Activated CD4-positive, alpha-beta T cell treated with anti-CD3 and anti-CD28 coated beads, Interleukin-2, amount 10 ng/mL, durations not matched to agents 24 days and 14 days (primary cell): ENCODE measurements at regions of chr12 and their contacts with region 1.

Region 1: DNA sequence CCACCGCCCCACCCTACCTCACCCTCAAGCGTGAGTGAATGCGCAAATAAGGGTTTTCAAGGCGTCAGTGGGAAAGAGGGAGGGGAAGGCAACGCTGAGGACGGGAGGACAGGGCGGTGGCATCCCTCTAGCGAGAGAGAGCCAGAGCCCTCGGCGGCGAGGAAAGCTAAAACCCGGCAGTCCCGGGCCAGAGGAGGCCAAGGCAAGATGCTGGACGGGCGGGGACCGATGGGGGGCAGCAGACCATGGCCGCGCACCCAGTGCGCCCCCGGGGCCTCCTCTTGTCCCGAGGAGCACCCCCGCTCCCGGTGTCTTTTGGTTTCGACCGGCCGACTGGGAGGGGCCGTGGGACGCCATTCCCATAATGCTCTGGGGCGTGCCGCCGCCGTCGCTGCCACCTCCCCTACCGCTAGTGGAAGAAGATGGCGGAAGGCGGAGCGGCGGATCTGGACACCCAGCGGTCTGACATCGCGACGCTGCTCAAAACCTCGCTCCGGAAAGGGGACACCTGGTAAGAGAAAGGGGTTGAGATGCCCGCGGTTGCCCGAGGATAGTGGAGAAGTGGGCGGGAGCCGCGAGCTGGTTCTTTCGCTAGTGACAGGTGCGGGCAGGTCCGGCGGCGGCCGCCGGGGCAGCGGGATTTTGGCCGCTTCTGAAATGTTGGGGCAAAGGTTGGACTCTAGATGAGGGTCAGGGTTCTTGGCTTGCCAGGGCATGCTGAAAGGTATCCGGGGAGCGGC is at the start of gene USP15:
- DNase-seq: peak; percentile 99
- H3K4me3 Mint-ChIP-seq: peak within 1 kb of the TSS; percentile 94
- H3K27ac Mint-ChIP-seq: peak within 1 kb of the TSS; percentile 99
- H3K4me1 Mint-ChIP-seq: peaks cover 48% of the 10 kb centered on the region
- H3K27me3 Mint-ChIP-seq: no peaks in the 10 kb centered on the region
- total RNA-seq, gene USP15: 102 and 112 TPM in 2 replicates

Region 2: DNA sequence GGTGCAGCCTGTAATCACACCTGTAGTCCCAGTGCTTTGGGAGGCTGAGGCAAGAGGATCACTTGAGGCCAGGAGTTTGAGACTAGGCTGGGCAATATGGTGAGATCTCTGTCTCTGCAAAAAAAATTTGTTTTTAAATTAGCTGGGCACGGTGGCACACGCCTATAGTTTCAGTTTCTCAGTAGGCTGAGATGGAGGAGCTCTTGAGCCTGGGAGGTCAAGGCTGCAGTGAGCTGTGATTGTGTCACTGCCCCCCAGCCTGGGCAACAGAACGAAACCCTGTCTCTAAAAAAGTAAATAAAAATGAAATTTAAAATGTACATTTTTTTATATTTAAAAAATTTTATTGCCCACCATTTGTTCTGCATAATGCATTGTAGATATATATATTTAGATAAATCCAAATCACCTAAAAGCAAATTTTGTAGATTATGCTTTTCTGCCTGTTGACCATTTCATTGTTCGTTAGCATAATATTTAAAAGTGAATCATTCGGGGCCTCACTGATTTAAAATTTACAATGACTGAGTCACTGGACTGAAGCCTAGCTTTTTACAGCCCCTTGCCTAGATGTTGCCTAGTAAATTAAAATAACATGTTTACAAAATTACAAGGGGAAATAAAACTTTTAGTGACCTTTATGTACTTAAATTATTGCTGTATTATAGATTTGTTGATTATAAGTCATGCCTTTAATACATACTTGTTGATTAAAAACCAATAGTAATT is 87.9 kb after region 1 on chr12:
- intact Hi-C with region 1: loop called (anchors 5 kb)
- DNase-seq: peak; percentile 51
- H3K4me3 Mint-ChIP-seq: no peak overlapping the region
- H3K27ac Mint-ChIP-seq: no peak overlapping the region
- H3K4me1 Mint-ChIP-seq: peaks cover 15% of the 10 kb centered on the region
- H3K27me3 Mint-ChIP-seq: no peaks in the 10 kb centered on the region

Region 3: DNA sequence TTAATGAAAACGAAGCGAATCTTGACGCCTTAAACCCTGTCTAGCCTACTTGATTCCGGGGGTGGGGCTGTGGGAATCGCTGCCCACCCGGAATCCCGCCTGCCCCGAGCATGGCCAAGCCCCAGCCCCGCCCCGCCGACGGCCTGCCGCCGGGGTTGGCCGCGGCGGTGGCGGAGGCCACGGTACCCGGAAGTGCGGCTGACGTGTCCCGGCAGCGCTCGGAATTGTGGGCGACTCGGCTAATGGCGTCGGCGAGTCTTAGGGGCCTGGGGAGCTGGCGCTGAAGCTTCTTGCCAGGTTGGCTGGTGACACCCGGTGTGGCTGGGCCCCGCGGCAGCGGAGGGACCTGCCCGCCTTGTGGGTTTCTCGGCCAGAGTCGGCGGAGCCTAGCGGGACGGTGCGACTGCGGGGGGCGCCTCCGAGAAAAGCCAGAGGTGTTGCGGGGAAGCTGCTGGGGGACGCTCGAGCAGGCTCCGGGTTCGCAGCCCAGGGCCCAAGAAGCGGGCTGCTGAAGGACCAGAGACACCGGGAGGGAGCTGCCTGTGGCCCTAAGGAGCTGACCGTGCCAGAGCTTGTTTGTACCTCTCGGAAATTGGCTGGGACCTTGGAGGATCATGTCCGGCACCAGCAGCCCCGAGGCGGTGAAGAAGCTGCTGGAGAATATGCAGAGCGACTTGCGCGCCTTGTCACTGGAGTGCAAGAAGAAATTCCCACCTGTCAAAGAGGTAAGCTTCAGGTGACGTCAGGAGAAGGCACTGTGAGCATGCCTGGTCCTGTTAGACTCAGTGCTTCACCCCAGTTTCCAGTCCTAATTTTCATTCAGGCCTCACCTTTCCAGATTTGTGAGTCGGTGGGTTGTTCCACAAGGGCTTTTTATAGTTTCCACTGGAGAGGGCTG is 206.7 kb after region 1 on chr12 and contains the start of gene MON2:
- intact Hi-C with region 1: loop called (anchors 1 kb)
- DNase-seq: peak; percentile 97
- H3K4me3 Mint-ChIP-seq: peak within 1 kb of the TSS; percentile 86
- H3K27ac Mint-ChIP-seq: peak within 1 kb of the TSS; percentile 93
- H3K4me1 Mint-ChIP-seq: peaks cover 19% of the 10 kb centered on the region
- H3K27me3 Mint-ChIP-seq: peaks cover 8% of the 10 kb centered on the region
- total RNA-seq, gene MON2: 32.8 and 36.4 TPM in 2 replicates

Region 4: GRCh38 chr12:62640910-62641448 is 380.8 kb after region 1 on chr12:
- intact Hi-C with region 1: loop called (anchors 2 kb)
- DNase-seq: peak; percentile 70
- H3K4me3 Mint-ChIP-seq: peak overlapping the region; percentile 24
- H3K27ac Mint-ChIP-seq: peak overlapping the region; percentile 83
- H3K4me1 Mint-ChIP-seq: peaks cover 10% of the 10 kb centered on the region
- H3K27me3 Mint-ChIP-seq: peaks cover 15% of the 10 kb centered on the region